Natural killer cell (primary cell): ENCODE measurements at regions of chrX and their contacts with region 1.

Region 1: DNA sequence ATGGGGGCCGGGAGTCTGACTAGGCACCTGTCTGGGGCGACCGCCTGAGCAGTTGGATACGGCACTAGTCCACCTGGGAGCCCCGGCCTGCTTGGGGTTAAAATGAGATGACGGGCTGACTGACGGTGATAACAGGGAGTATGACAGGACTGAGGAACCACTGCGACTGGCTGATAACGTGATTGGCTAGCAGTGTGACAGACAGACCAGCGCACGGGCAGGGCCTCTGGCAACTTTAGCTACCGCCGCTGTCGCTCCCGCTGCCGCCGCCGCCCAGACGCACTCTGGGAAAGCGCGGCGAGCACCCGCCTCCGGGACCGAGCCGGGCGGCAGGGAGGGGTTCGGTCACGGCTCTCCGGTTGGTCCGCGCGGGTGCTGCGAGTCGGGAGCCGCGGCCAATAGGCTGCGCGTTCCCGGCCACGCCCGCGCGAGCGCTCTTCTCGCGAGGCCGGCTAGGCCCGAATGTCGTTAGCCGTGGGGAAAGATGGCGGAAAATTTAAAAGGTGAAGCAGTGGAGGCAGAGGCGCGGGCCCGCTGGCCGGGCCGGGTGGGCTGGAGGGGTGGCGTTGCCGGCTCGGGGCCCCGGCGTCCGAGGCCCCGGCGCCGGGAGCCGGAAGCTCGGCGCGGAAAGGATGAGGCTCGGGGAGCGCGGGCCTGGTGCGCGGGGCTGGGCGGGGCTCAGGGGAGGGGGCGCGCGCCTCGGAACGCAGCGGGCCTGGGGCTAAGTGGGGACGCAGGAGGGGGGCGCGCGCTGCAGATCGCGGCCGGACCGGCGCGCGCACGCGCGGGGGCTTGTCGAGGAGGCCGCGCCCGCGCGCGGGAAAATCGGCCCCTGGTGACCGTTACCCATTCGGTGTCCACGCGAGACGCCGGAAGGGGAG is at the start of gene SUV39H1:
- DNase-seq: peak; percentile 77 to 93
- ATAC-seq: peak; percentile 89 to 95 (median 91)
- H3K4me3 ChIP-seq: peak within 1 kb of the TSS; percentile 72
- H3K4me3 Mint-ChIP-seq: peak within 1 kb of the TSS; percentile 90
- H3K27ac ChIP-seq: peak within 1 kb of the TSS; percentile 85
- H3K27ac Mint-ChIP-seq: peak within 1 kb of the TSS; percentile 86 to 99
- H3K4me1 ChIP-seq: peaks cover 20% of the 10 kb centered on the region
- H3K4me1 Mint-ChIP-seq: peaks cover 7 to 23% of the 10 kb centered on the region in 2 donors
- H3K27me3 ChIP-seq: no peaks in the 10 kb centered on the region
- H3K27me3 Mint-ChIP-seq: no peaks in the 10 kb centered on the region
- CTCF ChIP-seq: no peak
- total RNA-seq, gene SUV39H1: 9.2 to 11.6 (median 11.0) TPM

Region 2: GRCh38 chrX:47497273-47497672 is 1199.3 kb before region 1 on chrX:
- intact Hi-C with region 1: no loop called
- DNase-seq: peak in 1 of 2 donors; percentile 25
- ATAC-seq: no peak
- H3K4me3 ChIP-seq: no peak overlapping the region
- H3K4me3 Mint-ChIP-seq: no peak overlapping the region
- H3K27ac ChIP-seq: no peak overlapping the region
- H3K27ac Mint-ChIP-seq: no peak overlapping the region
- H3K4me1 ChIP-seq: peaks cover 3% of the 10 kb centered on the region
- H3K4me1 Mint-ChIP-seq: peaks cover 0 to 5% of the 10 kb centered on the region in 2 donors
- H3K27me3 ChIP-seq: no peaks in the 10 kb centered on the region
- H3K27me3 Mint-ChIP-seq: peaks cover 0 to 32% of the 10 kb centered on the region in 2 donors
- CTCF ChIP-seq: no peak

Region 3: GRCh38 chrX:48676106-48676892 is 20.2 kb before region 1 on chrX:
- intact Hi-C with region 1: loop called (anchors 2 kb)
- DNase-seq: peak; percentile 85 to 93
- ATAC-seq: peak; percentile 95 to 98 (median 96)
- H3K4me3 ChIP-seq: peak overlapping the region; percentile 80
- H3K4me3 Mint-ChIP-seq: peak overlapping the region; percentile 87
- H3K27ac ChIP-seq: peak overlapping the region; percentile 95
- H3K27ac Mint-ChIP-seq: peak overlapping the region; percentile 87 to 92
- H3K4me1 ChIP-seq: peaks cover 18% of the 10 kb centered on the region
- H3K4me1 Mint-ChIP-seq: peaks cover 4 to 15% of the 10 kb centered on the region in 2 donors
- H3K27me3 ChIP-seq: no peaks in the 10 kb centered on the region
- H3K27me3 Mint-ChIP-seq: no peaks in the 10 kb centered on the region
- CTCF ChIP-seq: no peak

Region 4: DNA sequence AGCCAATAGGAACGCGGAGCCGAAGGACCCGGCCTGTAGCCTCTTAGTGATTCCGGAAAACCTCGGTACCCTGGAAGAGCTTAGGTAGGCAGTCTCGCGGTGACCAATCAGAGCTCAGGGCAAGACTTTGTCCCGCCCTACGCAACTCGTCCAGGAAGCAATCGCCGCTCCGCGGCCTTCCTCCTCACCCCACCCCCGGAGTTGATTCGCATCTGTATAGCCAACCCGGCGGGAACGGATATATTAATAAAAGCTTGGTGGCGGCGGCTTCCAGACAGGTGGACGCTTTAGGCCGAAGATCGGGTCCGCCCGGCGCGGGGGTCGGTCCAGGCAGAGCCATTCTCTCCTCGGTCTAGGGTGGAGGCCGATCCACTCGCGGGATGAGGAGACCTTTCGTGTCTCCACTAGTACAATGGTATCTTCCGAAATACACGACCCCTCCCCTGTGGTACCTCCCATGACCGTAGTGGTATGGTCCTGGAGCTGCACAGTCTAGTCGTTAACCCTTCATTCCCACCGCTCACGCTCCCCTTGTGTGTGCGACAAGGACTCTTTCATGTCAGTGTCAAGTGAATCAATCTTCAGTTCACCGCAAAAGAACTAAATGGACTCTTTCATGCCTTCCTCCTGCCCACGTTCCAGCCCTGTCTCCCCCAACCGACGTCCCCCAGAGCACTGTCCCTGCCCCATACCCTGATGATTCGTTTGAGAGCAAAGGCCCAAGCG is 40.8 kb after region 1 on chrX:
- intact Hi-C with region 1: loop called (anchors 2 kb)
- DNase-seq: peak; percentile 72 to 96
- ATAC-seq: peak; percentile 95 to 99 (median 98)
- H3K4me3 ChIP-seq: peak overlapping the region; percentile 56
- H3K4me3 Mint-ChIP-seq: peak overlapping the region; percentile 82
- H3K27ac ChIP-seq: peak overlapping the region; percentile 86
- H3K27ac Mint-ChIP-seq: peak overlapping the region; percentile 90 to 96
- H3K4me1 ChIP-seq: peaks cover 18% of the 10 kb centered on the region
- H3K4me1 Mint-ChIP-seq: peaks cover 6 to 20% of the 10 kb centered on the region in 2 donors
- H3K27me3 ChIP-seq: no peaks in the 10 kb centered on the region
- H3K27me3 Mint-ChIP-seq: no peaks in the 10 kb centered on the region
- CTCF ChIP-seq: no peak

Region 5: GRCh38 chrX:48801280-48802088 is 104.9 kb after region 1 on chrX and contains the start of gene HDAC6:
- intact Hi-C with region 1: loop called (anchors 2 kb)
- DNase-seq: peak; percentile 90 to 97
- ATAC-seq: peak; percentile 80 to 94 (median 81)
- H3K4me3 ChIP-seq: peak within 1 kb of the TSS; percentile 91
- H3K4me3 Mint-ChIP-seq: peak within 1 kb of the TSS; percentile 96
- H3K27ac ChIP-seq: peak within 1 kb of the TSS; percentile 100
- H3K27ac Mint-ChIP-seq: peak within 1 kb of the TSS; percentile 97 to 98
- H3K4me1 ChIP-seq: peaks cover 16% of the 10 kb centered on the region
- H3K4me1 Mint-ChIP-seq: peaks cover 0 to 21% of the 10 kb centered on the region in 2 donors
- H3K27me3 ChIP-seq: no peaks in the 10 kb centered on the region
- H3K27me3 Mint-ChIP-seq: peaks cover 0 to 6% of the 10 kb centered on the region in 2 donors
- CTCF ChIP-seq: no peak
- total RNA-seq, gene HDAC6: 97.4 to 118 (median 101) TPM

Region 6: GRCh38 chrX:48989483-48989882 is 292.9 kb after region 1 on chrX:
- intact Hi-C with region 1: no loop called
- DNase-seq: no peak
- ATAC-seq: no peak
- H3K4me3 ChIP-seq: no peak overlapping the region
- H3K4me3 Mint-ChIP-seq: no peak overlapping the region
- H3K27ac ChIP-seq: no peak overlapping the region
- H3K27ac Mint-ChIP-seq: no peak overlapping the region
- H3K4me1 ChIP-seq: no peaks in the 10 kb centered on the region
- H3K4me1 Mint-ChIP-seq: peaks cover 7 to 11% of the 10 kb centered on the region in 2 donors
- H3K27me3 ChIP-seq: no peaks in the 10 kb centered on the region
- H3K27me3 Mint-ChIP-seq: no peaks in the 10 kb centered on the region
- CTCF ChIP-seq: no peak